HepG2 (cell line): ENCODE measurements at regions of chr19 and their contacts with region 1.

Region 1: GRCh38 chr19:47863514-47863936 is 4.5 kb downstream of the TPRX2 start:
- DNase-seq: peak; percentile 61
- ATAC-seq: peak; percentile 85
- H3K4me3 ChIP-seq: peak overlapping the region in 1 of 3 experiments; percentile 50; a peak in 1 of 6 replicates
- H3K27ac ChIP-seq: no peak overlapping the region
- H3K4me1 ChIP-seq: peaks cover 17% of the 10 kb centered on the region
- H3K27me3 ChIP-seq: 0 out of 5 replicates have a peak, but pooled peaks cover 0 to 3% of the 10 kb centered on the region in 2 experiments
- CTCF ChIP-seq: peak; percentile 95
- EP300 ChIP-seq: no peak
- POLR2A ChIP-seq: no peak
- RAD21 ChIP-seq: peak; percentile 67

Region 2: DNA sequence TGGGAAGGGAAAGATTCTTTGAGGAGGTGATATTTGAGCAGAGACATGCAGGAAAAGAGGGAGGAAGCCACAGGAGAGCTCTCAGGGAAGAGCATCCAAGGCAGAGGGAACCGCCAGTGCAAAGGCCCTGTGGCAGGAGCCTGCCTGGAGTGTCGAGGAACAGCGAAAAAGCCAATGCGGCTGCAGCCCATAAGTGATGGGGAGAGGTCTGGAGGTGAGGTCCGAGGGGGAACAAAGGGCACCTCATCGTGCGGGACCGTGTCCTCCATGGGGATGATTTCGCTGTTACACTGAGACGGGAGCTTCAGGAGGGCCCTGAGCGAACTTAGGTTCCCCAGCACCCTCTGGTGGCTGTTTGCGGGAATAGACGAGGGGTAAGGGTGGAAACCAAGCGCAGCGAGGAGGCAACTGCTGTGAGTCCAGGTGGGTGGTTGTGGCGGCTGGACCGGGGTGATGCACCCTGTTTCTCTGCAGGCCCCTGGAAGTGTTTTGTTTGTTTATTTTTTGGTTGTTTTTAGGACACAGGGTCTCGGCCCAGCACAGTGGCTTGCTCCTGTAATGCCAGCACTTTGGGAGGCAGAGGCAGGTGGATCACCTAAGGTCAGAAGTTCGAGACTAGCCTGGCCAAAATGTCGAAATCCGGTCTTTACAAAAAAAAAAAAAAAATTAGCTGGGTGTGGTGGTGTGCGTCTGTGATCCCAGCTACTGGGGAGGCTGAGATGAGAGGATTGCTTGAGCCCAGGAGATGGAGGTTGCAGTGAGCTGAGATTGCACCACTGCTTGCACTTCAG is 156.2 kb before region 1 on chr19:
- CTCF ChIA-PET with region 1: no interaction called
- POLR2A ChIA-PET with region 1: no interaction called
- in situ Hi-C with region 1: no loop called
- intact Hi-C with region 1: no loop called
- DNase-seq: peak; percentile 71
- ATAC-seq: peak; percentile 94
- H3K4me3 ChIP-seq: no peak overlapping the region
- H3K27ac ChIP-seq: no peak overlapping the region
- H3K4me1 ChIP-seq: peaks cover 10% of the 10 kb centered on the region
- H3K27me3 ChIP-seq: no peaks in the 10 kb centered on the region; a peak in 1 of 5 replicates
- CTCF ChIP-seq: peak; percentile 88
- EP300 ChIP-seq: no peak
- POLR2A ChIP-seq: no peak
- RAD21 ChIP-seq: peak; percentile 72

Region 3: DNA sequence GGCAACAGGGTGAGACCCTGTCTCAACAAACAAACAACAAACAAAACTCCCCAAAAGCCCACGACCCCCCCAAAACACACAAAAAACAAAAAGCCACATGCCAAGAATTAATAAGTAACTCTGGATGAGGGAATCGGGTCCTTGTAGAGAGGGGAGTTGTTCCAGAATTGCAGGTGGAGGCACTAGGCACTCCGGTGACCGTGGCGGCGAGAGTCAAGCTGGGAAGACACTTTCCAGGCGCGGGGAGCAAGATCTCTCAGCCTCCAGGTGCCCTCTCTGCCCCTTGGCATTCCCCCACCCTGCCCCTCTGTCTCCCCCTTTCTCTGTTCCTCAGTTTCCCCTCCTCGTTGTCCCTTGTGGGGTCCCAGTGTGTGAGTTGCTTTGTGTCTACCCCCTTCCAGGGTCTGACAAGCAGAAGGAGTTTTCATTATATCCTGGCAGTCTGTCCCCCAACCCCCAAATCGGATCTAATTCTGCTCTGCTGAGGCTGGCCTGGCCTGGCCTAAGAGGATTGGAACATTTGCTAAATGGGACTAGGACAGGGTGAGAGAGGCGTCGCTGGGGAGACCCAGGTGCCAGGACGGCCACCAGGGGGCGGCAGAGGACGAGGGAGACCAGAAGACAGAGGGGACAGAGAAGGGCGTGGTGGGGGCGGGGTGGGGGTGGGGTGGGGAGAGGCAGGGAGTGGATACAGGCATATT is 50.1 kb before region 1 on chr19:
- CTCF ChIA-PET with region 1: interaction called, 4 read pairs
- POLR2A ChIA-PET with region 1: no interaction called
- in situ Hi-C with region 1: no loop called
- intact Hi-C with region 1: loop called (anchors 2 kb)
- DNase-seq: peak; percentile 58
- ATAC-seq: peak; percentile 97
- H3K4me3 ChIP-seq: no peak overlapping the region
- H3K27ac ChIP-seq: no peak overlapping the region
- H3K4me1 ChIP-seq: peaks cover 6% of the 10 kb centered on the region; the same call in 1 of the 2 replicates
- H3K27me3 ChIP-seq: no peaks in the 10 kb centered on the region
- CTCF ChIP-seq: peak; percentile 78
- EP300 ChIP-seq: no peak
- POLR2A ChIP-seq: no peak
- RAD21 ChIP-seq: no peak

Region 4: DNA sequence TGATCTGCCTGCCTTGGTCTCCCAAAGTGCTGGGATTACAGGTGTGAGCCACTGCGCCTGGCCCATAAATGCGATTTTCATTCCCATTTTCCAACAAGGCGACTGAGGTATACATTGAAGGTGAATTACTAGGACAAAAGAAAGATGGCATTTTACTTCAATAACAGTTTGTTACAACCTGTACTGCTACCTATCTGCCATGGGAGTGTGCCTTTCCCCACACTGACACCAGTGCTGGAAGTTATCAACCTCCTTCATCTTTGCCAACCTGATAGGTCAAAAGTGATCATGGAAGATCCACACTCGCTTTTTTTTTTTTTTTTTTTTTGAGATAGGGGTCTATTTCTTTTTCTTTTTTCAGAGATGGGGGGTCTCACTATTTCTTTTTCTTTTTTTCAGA is 30.8 kb before region 1 on chr19:
- CTCF ChIA-PET with region 1: no interaction called
- POLR2A ChIA-PET with region 1: no interaction called
- in situ Hi-C with region 1: no loop called
- intact Hi-C with region 1: no loop called
- DNase-seq: no peak
- ATAC-seq: no peak
- H3K4me3 ChIP-seq: no peak overlapping the region
- H3K27ac ChIP-seq: no peak overlapping the region
- H3K4me1 ChIP-seq: no peaks in the 10 kb centered on the region
- H3K27me3 ChIP-seq: no peaks in the 10 kb centered on the region
- CTCF ChIP-seq: no peak
- EP300 ChIP-seq: no peak
- POLR2A ChIP-seq: no peak
- RAD21 ChIP-seq: no peak

Region 5: DNA sequence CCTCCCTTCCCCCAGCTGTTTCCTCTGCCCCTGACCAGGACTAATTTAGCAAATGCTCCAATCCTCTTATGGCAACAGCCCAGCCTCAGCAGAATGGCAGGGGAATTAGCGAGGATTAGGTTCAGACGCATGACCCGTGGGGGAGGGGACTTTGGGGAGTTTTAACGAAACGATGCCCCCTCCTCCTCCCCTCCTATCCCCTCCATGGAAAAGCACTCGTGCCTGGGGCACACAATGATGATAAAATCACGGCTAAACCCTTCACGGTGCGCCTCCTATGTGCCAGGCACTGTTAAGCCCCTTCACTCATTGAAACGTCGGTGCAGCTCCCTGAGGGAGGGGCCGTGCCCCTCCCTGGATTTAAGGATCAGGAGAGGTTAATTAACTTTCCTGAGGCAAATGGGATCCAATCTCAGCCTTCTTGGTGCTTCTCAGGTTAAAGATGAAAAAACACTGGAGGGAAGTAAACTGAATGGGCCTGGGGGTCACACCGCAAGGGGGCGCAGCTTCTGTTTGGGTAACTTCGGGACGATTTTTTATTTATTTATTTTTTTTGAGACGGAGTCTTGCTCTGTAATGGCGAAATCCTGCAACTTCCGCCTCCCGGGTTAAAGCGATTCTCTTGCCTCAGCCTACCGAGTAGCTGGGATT is 14.6 kb before region 1 on chr19:
- CTCF ChIA-PET with region 1: interaction called, 7 read pairs
- POLR2A ChIA-PET with region 1: no interaction called
- in situ Hi-C with region 1: no loop called
- intact Hi-C with region 1: loop called (anchors 1 kb)
- DNase-seq: peak; percentile 15
- ATAC-seq: no peak
- H3K4me3 ChIP-seq: no peak overlapping the region
- H3K27ac ChIP-seq: no peak overlapping the region
- H3K4me1 ChIP-seq: no peaks in the 10 kb centered on the region
- H3K27me3 ChIP-seq: peaks cover 1 to 2% of the 10 kb centered on the region in 2 experiments; a peak in 3 of 5 replicates
- CTCF ChIP-seq: peak; percentile 51
- EP300 ChIP-seq: no peak
- POLR2A ChIP-seq: no peak
- RAD21 ChIP-seq: no peak

Region 6: DNA sequence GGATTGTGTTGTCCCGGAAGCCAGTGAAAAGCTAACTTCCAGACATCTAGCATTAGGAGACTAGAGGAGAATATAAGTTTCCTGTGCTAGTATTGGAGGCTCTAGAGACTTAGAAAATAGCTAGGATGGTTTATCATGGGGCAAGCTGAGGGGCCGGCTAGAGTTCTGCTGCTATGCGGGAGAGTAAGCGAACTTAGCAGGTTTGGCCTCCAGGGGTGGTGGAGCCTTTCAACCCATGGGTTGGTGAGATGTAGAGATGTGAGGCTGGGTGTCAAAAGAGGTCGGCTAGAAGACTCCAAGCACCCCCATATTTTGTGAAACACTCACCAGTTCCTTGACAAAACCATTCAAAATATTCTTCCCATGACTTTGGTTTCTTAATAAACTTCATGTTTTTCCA is 18.2 kb after region 1 on chr19:
- CTCF ChIA-PET with region 1: no interaction called
- POLR2A ChIA-PET with region 1: no interaction called
- in situ Hi-C with region 1: no loop called
- intact Hi-C with region 1: no loop called
- DNase-seq: no peak
- ATAC-seq: no peak
- H3K4me3 ChIP-seq: no peak overlapping the region
- H3K27ac ChIP-seq: no peak overlapping the region
- H3K4me1 ChIP-seq: peaks cover 43% of the 10 kb centered on the region
- H3K27me3 ChIP-seq: no peaks in the 10 kb centered on the region; a peak in 1 of 5 replicates
- CTCF ChIP-seq: no peak
- EP300 ChIP-seq: no peak
- POLR2A ChIP-seq: no peak
- RAD21 ChIP-seq: no peak

Region 7: GRCh38 chr19:47891923-47892666 is 28.6 kb after region 1 on chr19:
- CTCF ChIA-PET with region 1: no interaction called
- POLR2A ChIA-PET with region 1: no interaction called
- in situ Hi-C with region 1: no loop called
- intact Hi-C with region 1: no loop called
- DNase-seq: peak; percentile 99
- ATAC-seq: peak; percentile 97
- H3K4me3 ChIP-seq: peak overlapping the region in 2 of 3 experiments; percentile 18 to 47; a peak in 4 of 6 replicates
- H3K27ac ChIP-seq: peak overlapping the region; percentile 99
- H3K4me1 ChIP-seq: peaks cover 78% of the 10 kb centered on the region
- H3K27me3 ChIP-seq: no peaks in the 10 kb centered on the region
- CTCF ChIP-seq: no peak
- EP300 ChIP-seq: peak in 1 of 2 experiments; percentile 79; a peak in 2 of 4 replicates
- POLR2A ChIP-seq: peak; percentile 97 to 99
- RAD21 ChIP-seq: no peak